Mammary epithelial cell (primary cell): ENCODE measurements at regions of chr15 and their contacts with region 1.

Region 1: DNA sequence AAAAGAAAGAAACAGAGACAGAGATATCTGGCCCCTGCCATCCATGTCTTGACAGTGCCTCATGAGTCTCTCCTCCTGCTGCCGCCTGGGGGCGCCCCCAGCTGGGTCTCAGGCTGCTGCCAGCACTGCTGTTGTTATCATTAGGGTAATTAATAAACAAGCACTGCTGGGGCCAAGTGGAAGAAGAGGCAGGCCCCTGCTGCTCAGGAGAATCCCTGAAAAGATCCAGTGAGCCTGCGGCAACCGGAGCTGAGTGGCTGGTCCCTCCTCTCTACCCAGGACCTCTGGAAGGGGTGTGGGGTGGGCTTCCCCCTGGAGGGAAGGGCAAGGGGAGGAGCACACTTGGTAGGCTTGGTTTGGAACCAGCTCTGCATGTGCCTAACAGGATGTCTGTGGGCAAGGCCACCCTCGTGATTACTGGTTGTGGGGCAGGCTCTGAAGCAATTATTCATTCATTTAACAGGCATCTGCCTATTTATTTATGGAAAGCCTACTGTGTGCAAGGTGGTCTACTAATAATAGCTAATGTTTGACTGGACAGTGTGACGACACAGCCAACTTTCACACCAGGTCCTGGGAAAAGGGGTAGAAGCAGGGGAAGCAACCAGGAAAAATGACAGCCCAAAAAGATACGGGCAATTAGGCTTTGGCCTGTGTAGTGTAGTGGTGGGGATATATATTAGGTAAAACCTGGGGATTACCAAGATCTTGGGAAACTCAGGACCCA is 1.2 kb upstream of the TYRO3 start:
- DNase-seq: peak; percentile 49
- H3K4me3 ChIP-seq: peak overlapping the region in 2 of 3 experiments; percentile 42 to 51
- H3K27ac ChIP-seq: no peak overlapping the region
- H3K4me1 ChIP-seq: peaks cover 17% of the 10 kb centered on the region
- H3K27me3 ChIP-seq: no peaks in the 10 kb centered on the region
- CTCF ChIP-seq: peak; percentile 88 to 92

Region 2: GRCh38 chr15:41465822-41466421 is 91.9 kb before region 1 on chr15:
- CTCF ChIA-PET with region 1: interaction called, 5 read pairs
- dilution Hi-C with region 1: no loop called
- in situ Hi-C with region 1: no loop called
- intact Hi-C with region 1: loop called (anchors 5 kb)
- DNase-seq: peak; percentile 37
- H3K4me3 ChIP-seq: no peak overlapping the region
- H3K27ac ChIP-seq: no peak overlapping the region
- H3K4me1 ChIP-seq: no peaks in the 10 kb centered on the region
- H3K27me3 ChIP-seq: no peaks in the 10 kb centered on the region
- CTCF ChIP-seq: peak; percentile 99 to 100

Region 3: DNA sequence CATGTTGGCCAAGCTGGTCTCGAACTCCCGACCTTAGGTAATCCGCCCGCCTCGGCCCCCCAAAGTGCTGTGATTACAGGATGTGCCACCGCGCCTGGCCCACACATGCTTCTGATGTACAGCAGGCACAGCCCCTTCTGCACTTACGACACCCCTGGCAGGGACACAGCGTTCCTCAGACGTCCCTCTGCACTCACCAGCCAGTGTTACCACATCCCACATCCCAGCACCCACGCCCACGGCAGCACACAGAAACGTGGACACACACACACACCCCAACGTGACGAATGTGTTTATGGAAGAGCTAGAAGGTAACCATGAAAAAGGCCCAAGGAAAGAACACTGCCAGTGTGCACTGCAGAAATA is 13.2 kb before region 1 on chr15:
- CTCF ChIA-PET with region 1: no interaction called
- dilution Hi-C with region 1: no loop called
- in situ Hi-C with region 1: no loop called
- intact Hi-C with region 1: no loop called
- DNase-seq: no peak
- H3K4me3 ChIP-seq: peak overlapping the region in 1 of 3 experiments; percentile 12
- H3K27ac ChIP-seq: no peak overlapping the region
- H3K4me1 ChIP-seq: peaks cover 8% of the 10 kb centered on the region
- H3K27me3 ChIP-seq: no peaks in the 10 kb centered on the region
- CTCF ChIP-seq: no peak

Region 4: GRCh38 chr15:41585127-41586047 is 27.6 kb after region 1 on chr15:
- CTCF ChIA-PET with region 1: interaction called, 3 read pairs
- dilution Hi-C with region 1: no loop called
- in situ Hi-C with region 1: no loop called
- intact Hi-C with region 1: loop called (anchors 2 kb)
- DNase-seq: peak; percentile 55
- H3K4me3 ChIP-seq: peak overlapping the region; percentile 6 to 45 (median 34)
- H3K27ac ChIP-seq: no peak overlapping the region
- H3K4me1 ChIP-seq: peaks cover 12% of the 10 kb centered on the region
- H3K27me3 ChIP-seq: no peaks in the 10 kb centered on the region
- CTCF ChIP-seq: peak; percentile 11 to 26

Region 5: DNA sequence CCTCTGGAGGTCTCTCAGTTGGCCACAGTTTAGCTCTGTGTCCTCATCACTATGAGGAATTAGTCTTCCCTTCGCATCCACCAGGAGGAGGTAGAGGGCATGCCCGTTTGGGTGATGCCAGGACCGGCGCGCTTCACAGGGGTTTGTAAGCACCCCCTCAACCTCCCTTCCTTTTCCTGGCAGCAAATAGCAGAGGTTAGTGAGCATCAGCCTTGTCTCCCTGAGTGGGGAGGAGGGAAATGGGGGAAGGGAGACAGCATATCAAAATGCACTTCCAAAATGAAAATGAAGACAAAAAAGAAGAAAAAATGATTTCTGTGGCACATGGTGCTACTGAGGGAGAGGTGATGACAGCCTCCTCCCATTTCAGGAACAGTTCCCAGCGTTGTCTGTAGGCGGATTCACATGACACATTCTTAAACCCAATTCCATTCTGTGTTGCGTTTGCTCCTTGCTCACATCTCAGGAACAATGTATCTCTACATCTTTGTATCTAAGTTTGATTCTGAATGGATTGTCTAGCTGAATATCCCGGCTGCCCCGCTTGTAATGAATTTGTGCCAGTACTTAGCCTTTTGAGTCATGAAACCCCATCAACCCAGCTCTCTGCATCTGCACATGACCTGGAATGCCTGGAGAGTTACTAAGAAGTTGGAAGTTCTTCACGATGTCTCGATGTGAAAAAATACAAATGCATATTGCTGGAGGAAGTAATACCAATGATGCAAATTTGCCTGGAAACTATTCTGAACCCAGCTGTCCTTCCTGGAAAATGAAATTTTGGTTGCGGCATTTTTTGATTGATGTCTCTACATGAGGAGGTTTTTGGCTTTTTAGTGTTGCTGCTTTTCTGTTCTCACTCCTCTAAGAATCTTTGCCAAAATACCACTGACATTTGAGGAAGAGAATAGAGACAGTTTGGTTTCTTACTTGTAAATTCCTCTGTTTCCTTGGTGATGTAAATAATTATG is 46.4 kb after region 1 on chr15:
- CTCF ChIA-PET with region 1: no interaction called
- dilution Hi-C with region 1: no loop called
- in situ Hi-C with region 1: no loop called
- intact Hi-C with region 1: loop called (anchors 5 kb)
- DNase-seq: peak; percentile 67
- H3K4me3 ChIP-seq: peak overlapping the region; percentile 16 to 22 (median 16)
- H3K27ac ChIP-seq: no peak overlapping the region
- H3K4me1 ChIP-seq: peaks cover 13% of the 10 kb centered on the region
- H3K27me3 ChIP-seq: no peaks in the 10 kb centered on the region
- CTCF ChIP-seq: peak; percentile 82 to 86

Region 6: GRCh38 chr15:41660235-41661077 is 102.6 kb after region 1 on chr15 and contains the start of gene MGA:
- CTCF ChIA-PET with region 1: no interaction called
- dilution Hi-C with region 1: no loop called
- in situ Hi-C with region 1: no loop called
- intact Hi-C with region 1: loop called (anchors 5 kb)
- DNase-seq: peak; percentile 89
- H3K4me3 ChIP-seq: peak within 1 kb of the TSS; percentile 43 to 62 (median 53)
- H3K27ac ChIP-seq: peak within 1 kb of the TSS; percentile 36
- H3K4me1 ChIP-seq: peaks cover 23% of the 10 kb centered on the region
- H3K27me3 ChIP-seq: no peaks in the 10 kb centered on the region
- CTCF ChIP-seq: no peak
- total RNA-seq, gene MGA: 22.8 to 30.3 TPM

Region 7: GRCh38 chr15:41746802-41747201 is 189.0 kb after region 1 on chr15:
- CTCF ChIA-PET with region 1: no interaction called
- dilution Hi-C with region 1: no loop called
- in situ Hi-C with region 1: no loop called
- intact Hi-C with region 1: no loop called
- DNase-seq: peak; percentile 19
- H3K4me3 ChIP-seq: no peak overlapping the region
- H3K27ac ChIP-seq: no peak overlapping the region
- H3K4me1 ChIP-seq: no peaks in the 10 kb centered on the region
- H3K27me3 ChIP-seq: no peaks in the 10 kb centered on the region
- CTCF ChIP-seq: no peak

Region 8: DNA sequence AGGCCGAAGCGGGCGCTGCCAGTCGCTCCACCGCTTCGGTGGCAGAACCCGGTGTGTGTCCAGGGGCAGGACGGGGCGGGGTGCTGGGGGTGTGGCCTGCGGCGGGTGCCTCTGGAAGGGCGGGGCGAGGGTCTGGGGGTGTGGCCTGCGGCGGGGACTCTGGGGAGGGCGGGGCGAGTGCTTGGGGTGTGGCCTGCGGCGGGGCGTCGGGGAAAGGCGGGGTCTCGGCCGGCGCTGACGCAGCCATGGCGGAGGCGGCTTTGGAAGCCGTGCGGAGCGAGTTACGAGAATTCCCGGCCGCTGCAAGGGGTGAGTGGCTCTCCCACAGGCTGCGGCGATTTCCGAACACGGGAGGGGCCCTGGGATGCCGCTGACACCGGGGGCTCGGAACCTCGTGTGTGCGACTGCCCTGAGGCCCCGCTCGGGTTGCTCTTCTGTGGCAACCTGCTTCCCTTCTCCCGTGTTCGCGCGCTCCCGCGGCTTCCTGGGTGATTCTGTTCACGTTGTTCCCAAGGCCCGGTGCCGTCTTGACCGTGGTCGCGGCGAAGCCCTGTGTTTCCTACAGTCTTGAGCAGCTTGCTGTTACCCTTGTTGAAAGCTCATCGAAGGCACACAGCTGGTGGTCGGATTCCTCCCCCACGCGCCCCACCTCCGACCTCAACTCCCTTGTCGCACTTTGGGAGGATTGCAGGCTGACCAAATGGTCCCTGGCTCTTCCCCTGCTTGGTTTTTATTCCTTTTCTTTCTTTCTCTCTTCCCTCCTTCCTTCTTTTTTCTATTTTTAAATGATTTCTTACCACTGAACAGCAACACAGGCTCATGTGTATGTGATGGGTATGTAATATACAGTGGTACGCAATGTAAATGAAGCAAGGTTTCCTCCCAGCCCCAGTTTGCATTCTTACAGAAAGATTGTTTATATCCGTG is 270.3 kb after region 1 on chr15 and contains the start of gene JMJD7:
- CTCF ChIA-PET with region 1: no interaction called
- dilution Hi-C with region 1: no loop called
- in situ Hi-C with region 1: no loop called
- intact Hi-C with region 1: loop called (anchors 2 kb)
- DNase-seq: peak; percentile 83
- H3K4me3 ChIP-seq: peak within 1 kb of the TSS; percentile 69 to 93 (median 73)
- H3K27ac ChIP-seq: peak within 1 kb of the TSS; percentile 84
- H3K4me1 ChIP-seq: peaks cover 55% of the 10 kb centered on the region
- H3K27me3 ChIP-seq: no peaks in the 10 kb centered on the region
- CTCF ChIP-seq: no peak
- total RNA-seq, gene JMJD7: 5.8 to 22.3 TPM

Region 9: GRCh38 chr15:41904541-41905005 is 346.7 kb after region 1 on chr15:
- CTCF ChIA-PET with region 1: no interaction called
- dilution Hi-C with region 1: no loop called
- in situ Hi-C with region 1: no loop called
- intact Hi-C with region 1: loop called (anchors 5 kb)
- DNase-seq: peak; percentile 42
- H3K4me3 ChIP-seq: no peak overlapping the region
- H3K27ac ChIP-seq: no peak overlapping the region
- H3K4me1 ChIP-seq: no peaks in the 10 kb centered on the region
- H3K27me3 ChIP-seq: no peaks in the 10 kb centered on the region
- CTCF ChIP-seq: peak; percentile 80 to 88